ENCODE measurements at regions of chr20 and their contacts with region 1.

Region 1: DNA sequence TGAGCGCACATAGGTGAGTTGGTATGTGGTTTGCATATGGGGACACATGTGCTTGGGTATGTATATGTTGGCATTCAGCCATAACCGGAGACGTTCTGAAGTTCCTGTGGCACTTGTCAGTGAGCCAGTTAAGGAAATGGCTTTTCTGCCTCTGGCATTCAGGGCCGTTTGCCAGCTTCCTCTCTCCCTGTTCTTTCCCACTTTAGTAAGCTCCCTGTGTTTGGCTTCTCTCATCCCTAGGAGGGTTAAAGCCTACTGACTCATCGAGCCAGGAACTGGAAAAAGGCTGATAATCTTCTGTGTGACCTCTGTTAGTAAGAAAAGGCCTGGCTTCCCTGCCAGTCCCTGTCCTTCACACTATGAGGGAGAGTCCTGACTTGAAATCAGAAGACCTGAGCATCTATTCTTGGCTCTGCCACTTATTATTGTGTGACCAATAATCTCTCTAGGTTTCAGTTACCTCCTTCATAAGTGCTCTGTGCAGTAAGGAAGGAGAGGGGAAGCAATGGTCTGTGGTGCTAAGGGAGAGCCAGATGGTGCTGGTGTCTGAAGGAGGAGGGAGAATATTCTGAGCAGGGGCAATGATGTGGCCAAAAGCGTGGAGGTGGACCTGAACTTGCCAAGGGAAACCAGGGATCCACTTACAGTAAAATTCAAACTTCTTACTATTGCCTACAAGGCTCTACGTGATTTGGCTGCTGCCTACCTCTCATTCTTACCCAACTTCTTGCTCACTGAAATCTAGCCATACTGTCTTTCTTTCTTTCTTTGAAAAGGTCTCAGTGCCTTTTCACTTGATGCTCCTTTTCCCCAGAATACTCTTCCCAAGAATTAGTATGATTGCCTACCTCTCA is 31.4 kb downstream of the ACSS2 start:
- DNase-seq: peak; percentile 76
- ATAC-seq: peak; percentile 94
- H3K4me3 ChIP-seq: peak overlapping the region in 1 of 2 experiments; percentile 0; a peak in 1 of 4 replicates
- H3K27ac ChIP-seq: peak overlapping the region; percentile 32
- H3K4me1 ChIP-seq: peaks cover 8% of the 10 kb centered on the region
- H3K27me3 ChIP-seq: no peaks in the 10 kb centered on the region
- CTCF ChIP-seq: no peak

Region 2: DNA sequence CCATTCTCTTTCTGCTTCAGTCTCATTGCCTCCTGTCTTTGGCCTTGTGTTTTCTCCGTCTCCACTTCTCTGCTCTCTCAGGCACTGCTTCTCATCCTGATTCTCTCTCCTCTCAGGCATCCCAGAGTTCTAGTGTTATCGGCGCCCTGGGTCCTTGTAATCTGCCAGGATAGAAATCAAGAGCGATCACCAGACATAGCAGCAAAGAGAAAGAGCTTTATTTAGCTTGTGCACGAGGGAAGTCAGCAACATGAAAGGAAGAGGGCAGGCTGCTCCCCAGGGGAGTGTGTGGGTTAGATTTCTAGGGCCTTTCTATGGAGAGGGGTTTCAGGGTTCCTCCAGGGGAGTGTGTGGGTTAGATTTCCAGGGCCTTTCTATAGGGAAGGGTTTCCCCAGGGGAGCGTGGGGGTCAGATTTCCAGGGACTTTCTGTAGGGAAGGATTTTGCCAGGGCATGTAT is 1936.1 kb before region 1 on chr20:
- CTCF ChIA-PET with region 1: no interaction called
- POLR2A ChIA-PET with region 1: interaction called, 11 read pairs
- in situ Hi-C with region 1: no loop called
- intact Hi-C with region 1: no loop called
- DNase-seq: no peak
- ATAC-seq: no peak
- H3K4me3 ChIP-seq: no peak overlapping the region
- H3K27ac ChIP-seq: no peak overlapping the region
- H3K4me1 ChIP-seq: peaks cover 6% of the 10 kb centered on the region; the same call in 1 of the 2 replicates
- H3K27me3 ChIP-seq: no peaks in the 10 kb centered on the region
- CTCF ChIP-seq: no peak